Activated CD4-positive, alpha-beta T cell treated with anti-CD3 and anti-CD28 coated beads for 36 hours (primary cell): ENCODE measurements at regions of chr19 and their contacts with region 1.

Region 1: GRCh38 chr19:2962045-2962561 is 15.3 kb upstream of the TLE6 start:
- DNase-seq: peak; percentile 64
- ATAC-seq: peak; percentile 84
- H3K4me3 Mint-ChIP-seq: peak overlapping the region; percentile 38
- H3K27ac Mint-ChIP-seq: peak overlapping the region; percentile 65
- H3K4me1 Mint-ChIP-seq: peaks cover 5% of the 10 kb centered on the region
- H3K27me3 Mint-ChIP-seq: no peaks in the 10 kb centered on the region

Region 2: GRCh38 chr19:2691951-2692350 is 270.2 kb before region 1 on chr19:
- CTCF ChIA-PET with region 1: no interaction called
- POLR2A ChIA-PET with region 1: no interaction called
- intact Hi-C with region 1: no loop called
- DNase-seq: no peak
- ATAC-seq: no peak
- H3K4me3 Mint-ChIP-seq: no peak overlapping the region
- H3K27ac Mint-ChIP-seq: no peak overlapping the region
- H3K4me1 Mint-ChIP-seq: no peaks in the 10 kb centered on the region
- H3K27me3 Mint-ChIP-seq: no peaks in the 10 kb centered on the region

Region 3: GRCh38 chr19:2977001-2977685 is 15.0 kb after region 1 on chr19 and contains the start of gene TLE6:
- CTCF ChIA-PET with region 1: interaction called, 8 read pairs
- POLR2A ChIA-PET with region 1: no interaction called
- intact Hi-C with region 1: loop called in 1 of 2 experiments (anchors 1 kb)
- DNase-seq: peak; percentile 98
- ATAC-seq: peak; percentile 100
- H3K4me3 Mint-ChIP-seq: peak within 1 kb of the TSS; percentile 77
- H3K27ac Mint-ChIP-seq: peak within 1 kb of the TSS; percentile 63
- H3K4me1 Mint-ChIP-seq: peaks cover 14% of the 10 kb centered on the region
- H3K27me3 Mint-ChIP-seq: peaks cover 4% of the 10 kb centered on the region
- total RNA-seq, gene TLE6: 2.6 to 3.5 TPM

Region 4: GRCh38 chr19:3075895-3076431 is 113.9 kb after region 1 on chr19:
- CTCF ChIA-PET with region 1: interaction called, 4 read pairs
- POLR2A ChIA-PET with region 1: no interaction called
- intact Hi-C with region 1: loop called in 1 of 2 experiments (anchors 1 kb)
- DNase-seq: peak; percentile 86
- ATAC-seq: peak; percentile 88
- H3K4me3 Mint-ChIP-seq: no peak overlapping the region
- H3K27ac Mint-ChIP-seq: no peak overlapping the region
- H3K4me1 Mint-ChIP-seq: peaks cover 4% of the 10 kb centered on the region
- H3K27me3 Mint-ChIP-seq: no peaks in the 10 kb centered on the region

Region 5: DNA sequence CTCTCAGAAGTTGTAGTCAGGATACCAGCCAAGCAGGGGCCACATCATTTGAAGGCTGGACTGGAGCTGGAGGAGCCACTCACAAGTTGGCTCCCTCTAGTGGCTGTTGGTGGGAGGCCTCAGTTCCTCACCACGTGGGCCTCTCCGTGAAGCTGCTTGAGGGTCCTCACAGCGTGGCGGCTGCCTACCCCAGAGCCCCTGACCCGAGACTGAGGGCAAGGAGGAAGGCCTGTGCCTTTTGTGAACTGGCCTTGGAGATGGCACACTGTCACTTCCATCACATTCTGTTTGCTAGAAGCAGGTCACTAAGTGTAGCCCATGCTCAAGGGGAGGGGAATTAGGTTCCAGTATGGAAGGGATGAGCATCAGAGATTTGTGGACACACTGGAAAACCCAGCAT is 146.7 kb after region 1 on chr19:
- CTCF ChIA-PET with region 1: interaction called, 28 read pairs
- POLR2A ChIA-PET with region 1: no interaction called
- intact Hi-C with region 1: loop called (anchors 1 kb)
- DNase-seq: peak; percentile 84
- ATAC-seq: peak; percentile 80
- H3K4me3 Mint-ChIP-seq: no peak overlapping the region
- H3K27ac Mint-ChIP-seq: no peak overlapping the region
- H3K4me1 Mint-ChIP-seq: peaks cover 6% of the 10 kb centered on the region
- H3K27me3 Mint-ChIP-seq: no peaks in the 10 kb centered on the region

Region 6: GRCh38 chr19:3163230-3163886 is 201.3 kb after region 1 on chr19:
- CTCF ChIA-PET with region 1: interaction called, 4 read pairs
- POLR2A ChIA-PET with region 1: no interaction called
- intact Hi-C with region 1: loop called (anchors 1 kb)
- DNase-seq: peak; percentile 82
- ATAC-seq: peak; percentile 82
- H3K4me3 Mint-ChIP-seq: no peak overlapping the region
- H3K27ac Mint-ChIP-seq: peak overlapping the region; percentile 42
- H3K4me1 Mint-ChIP-seq: peaks cover 23% of the 10 kb centered on the region
- H3K27me3 Mint-ChIP-seq: no peaks in the 10 kb centered on the region

Region 7: GRCh38 chr19:3250675-3251074 is 288.6 kb after region 1 on chr19:
- CTCF ChIA-PET with region 1: interaction called, 3 read pairs
- POLR2A ChIA-PET with region 1: no interaction called
- intact Hi-C with region 1: loop called in 1 of 2 experiments (anchors 1 kb)
- DNase-seq: peak; percentile 69
- ATAC-seq: peak; percentile 83
- H3K4me3 Mint-ChIP-seq: no peak overlapping the region
- H3K27ac Mint-ChIP-seq: no peak overlapping the region
- H3K4me1 Mint-ChIP-seq: no peaks in the 10 kb centered on the region
- H3K27me3 Mint-ChIP-seq: peaks cover 18% of the 10 kb centered on the region